CD4-positive, alpha-beta memory T cell (primary cell): ENCODE measurements at regions of chr12 and their contacts with region 1.

Region 1: GRCh38 chr12:3947781-3948180 is 74.6 kb upstream of the PARP11 start:
- DNase-seq: peak in 4 of 5 donors; percentile 73 to 82 (median 78)
- H3K4me3 ChIP-seq: no peak overlapping the region
- H3K4me3 Mint-ChIP-seq: peak overlapping the region; percentile 31 to 84 (median 54)
- H3K27ac ChIP-seq: peak overlapping the region; percentile 57
- H3K27ac Mint-ChIP-seq: peak overlapping the region; percentile 89 to 99 (median 99)
- H3K4me1 ChIP-seq: peaks cover 65% of the 10 kb centered on the region
- H3K4me1 Mint-ChIP-seq: peaks cover 50 to 86% (median 63%) of the 10 kb centered on the region in 4 donors
- H3K27me3 ChIP-seq: no peaks in the 10 kb centered on the region
- H3K27me3 Mint-ChIP-seq: no peaks in the 10 kb centered on the region

Region 2: GRCh38 chr12:3905664-3906063 is 42.1 kb before region 1 on chr12:
- CTCF ChIA-PET with region 1: interaction called, 3 read pairs
- POLR2A ChIA-PET with region 1: interaction called, 38 read pairs
- intact Hi-C with region 1: no loop called
- DNase-seq: no peak
- H3K4me3 ChIP-seq: peak overlapping the region; percentile 34 to 36
- H3K4me3 Mint-ChIP-seq: peak overlapping the region; percentile 57 to 91 (median 86)
- H3K27ac ChIP-seq: peak overlapping the region; percentile 20
- H3K27ac Mint-ChIP-seq: peak overlapping the region; percentile 63 to 94 (median 83)
- H3K4me1 ChIP-seq: peaks cover 33% of the 10 kb centered on the region
- H3K4me1 Mint-ChIP-seq: peaks cover 23 to 45% (median 30%) of the 10 kb centered on the region in 4 donors
- H3K27me3 ChIP-seq: no peaks in the 10 kb centered on the region
- H3K27me3 Mint-ChIP-seq: no peaks in the 10 kb centered on the region

Region 3: DNA sequence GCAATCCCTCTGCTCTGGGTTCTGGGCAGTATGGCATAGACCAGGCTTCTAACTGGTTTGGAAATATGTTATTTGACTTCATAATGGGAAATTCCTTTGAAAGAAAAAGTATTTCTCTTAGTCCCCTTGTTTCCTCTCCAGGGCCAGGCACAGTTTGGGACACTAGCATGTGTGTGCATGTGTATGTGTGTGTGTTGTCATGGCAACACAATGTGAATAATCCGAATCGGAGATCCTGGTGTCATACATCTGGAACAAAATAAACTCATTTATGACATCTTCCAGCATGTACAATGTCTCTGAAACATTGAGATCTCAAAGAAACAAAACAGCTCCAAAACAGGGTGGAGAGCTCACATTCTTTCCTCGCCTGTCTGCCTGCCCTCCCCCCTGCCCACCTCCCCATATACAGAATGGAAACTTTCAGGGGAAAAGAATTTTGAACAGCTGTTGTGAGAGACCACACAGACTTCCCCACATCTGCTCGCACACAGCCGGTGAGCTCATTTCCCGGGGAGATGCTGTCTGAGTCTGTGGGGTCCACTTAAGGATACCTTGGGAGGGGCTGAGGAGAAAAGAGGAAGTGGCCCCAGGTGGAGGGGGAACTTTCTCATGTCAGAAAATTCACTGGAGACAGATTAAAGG is 19.1 kb before region 1 on chr12:
- CTCF ChIA-PET with region 1: interaction called, 8 read pairs
- POLR2A ChIA-PET with region 1: interaction called, 87 read pairs
- intact Hi-C with region 1: no loop called
- DNase-seq: no peak
- H3K4me3 ChIP-seq: no peak overlapping the region
- H3K4me3 Mint-ChIP-seq: no peak overlapping the region
- H3K27ac ChIP-seq: no peak overlapping the region
- H3K27ac Mint-ChIP-seq: peak overlapping the region in 5 of 7 donors; percentile 19 to 84 (median 64)
- H3K4me1 ChIP-seq: peaks cover 41% of the 10 kb centered on the region
- H3K4me1 Mint-ChIP-seq: peaks cover 34 to 70% (median 56%) of the 10 kb centered on the region in 4 donors
- H3K27me3 ChIP-seq: no peaks in the 10 kb centered on the region
- H3K27me3 Mint-ChIP-seq: no peaks in the 10 kb centered on the region

Region 4: DNA sequence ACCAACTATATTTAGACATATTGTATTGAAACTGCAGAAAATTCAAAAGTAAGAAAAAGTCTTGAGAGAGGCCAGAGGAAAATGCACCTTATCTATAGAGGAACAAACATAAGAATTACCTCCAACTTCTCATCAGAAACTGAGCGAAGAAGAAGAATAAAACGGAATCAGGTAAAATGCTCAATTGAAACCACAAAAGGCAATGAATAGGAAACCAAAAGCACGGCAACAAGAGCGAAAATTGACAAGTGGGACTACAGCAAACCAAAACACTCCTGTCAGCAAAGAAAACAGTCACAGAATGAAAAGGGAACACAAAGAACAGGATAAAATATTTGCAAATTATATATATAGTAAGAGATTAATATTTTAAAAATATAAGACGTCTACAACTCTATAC is 12.7 kb before region 1 on chr12:
- CTCF ChIA-PET with region 1: interaction called, 8 read pairs
- POLR2A ChIA-PET with region 1: interaction called, 87 read pairs
- intact Hi-C with region 1: loop called (anchors 1 kb)
- DNase-seq: peak in 4 of 5 donors; percentile 51 to 69 (median 58)
- H3K4me3 ChIP-seq: peak overlapping the region; percentile 21 to 32
- H3K4me3 Mint-ChIP-seq: peak overlapping the region; percentile 27 to 97 (median 84)
- H3K27ac ChIP-seq: no peak overlapping the region
- H3K27ac Mint-ChIP-seq: peak overlapping the region; percentile 39 to 99 (median 92)
- H3K4me1 ChIP-seq: peaks cover 55% of the 10 kb centered on the region
- H3K4me1 Mint-ChIP-seq: peaks cover 43 to 72% (median 54%) of the 10 kb centered on the region in 4 donors
- H3K27me3 ChIP-seq: no peaks in the 10 kb centered on the region
- H3K27me3 Mint-ChIP-seq: no peaks in the 10 kb centered on the region

Region 5: GRCh38 chr12:3973978-3974644 is 26.3 kb after region 1 on chr12:
- CTCF ChIA-PET with region 1: no interaction called
- POLR2A ChIA-PET with region 1: interaction called, 10 read pairs
- intact Hi-C with region 1: no loop called
- DNase-seq: peak in 3 of 5 donors; percentile 20 to 46 (median 21)
- H3K4me3 ChIP-seq: peak overlapping the region in 1 of 2 donors; percentile 8
- H3K4me3 Mint-ChIP-seq: peak overlapping the region; percentile 5 to 83 (median 74)
- H3K27ac ChIP-seq: peak overlapping the region; percentile 43
- H3K27ac Mint-ChIP-seq: peak overlapping the region; percentile 75 to 93 (median 90)
- H3K4me1 ChIP-seq: peaks cover 57% of the 10 kb centered on the region
- H3K4me1 Mint-ChIP-seq: peaks cover 39 to 64% (median 51%) of the 10 kb centered on the region in 4 donors
- H3K27me3 ChIP-seq: no peaks in the 10 kb centered on the region
- H3K27me3 Mint-ChIP-seq: no peaks in the 10 kb centered on the region